CD8-positive, alpha-beta T cell (primary cell): ENCODE measurements at regions of chr3 and their contacts with region 1.

Region 1: GRCh38 chr3:5217824-5218595 is 30.5 kb downstream of the EDEM1 start:
- DNase-seq: no peak
- ATAC-seq: no peak
- H3K4me3 ChIP-seq: no peak overlapping the region
- H3K4me3 Mint-ChIP-seq: no peak overlapping the region
- H3K27ac ChIP-seq: no peak overlapping the region
- H3K27ac Mint-ChIP-seq: peak overlapping the region; percentile 69
- H3K4me1 ChIP-seq: no peaks in the 10 kb centered on the region
- H3K4me1 Mint-ChIP-seq: peaks cover 8% of the 10 kb centered on the region
- H3K27me3 ChIP-seq: no peaks in the 10 kb centered on the region
- H3K27me3 Mint-ChIP-seq: no peaks in the 10 kb centered on the region
- CTCF ChIP-seq: no peak

Region 2: DNA sequence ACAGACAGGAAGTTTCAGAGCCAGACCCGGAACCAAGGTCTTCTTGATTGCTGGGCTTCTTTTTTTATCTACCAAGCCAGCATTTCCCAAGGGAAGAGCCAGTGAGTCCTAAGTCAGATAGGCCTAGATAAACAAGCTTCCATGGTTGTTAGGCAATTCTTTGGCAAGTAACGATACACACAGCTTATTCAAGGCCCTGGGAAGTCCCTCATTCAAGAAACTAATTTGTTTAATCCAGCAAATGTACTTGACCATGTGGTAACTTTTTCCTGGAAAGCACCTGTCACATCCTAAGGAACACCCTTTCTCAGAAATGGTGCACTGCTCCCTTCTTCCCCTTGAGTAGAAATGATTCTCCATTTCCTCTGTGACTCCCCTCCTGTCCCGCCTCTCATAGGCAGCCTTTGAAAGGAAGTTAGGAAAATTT is 514.9 kb before region 1 on chr3:
- CTCF ChIA-PET with region 1: no interaction called
- POLR2A ChIA-PET with region 1: no interaction called
- intact Hi-C with region 1: loop called in 1 of 2 experiments (anchors 10 kb)
- DNase-seq: no peak
- ATAC-seq: no peak
- H3K4me3 ChIP-seq: no peak overlapping the region
- H3K4me3 Mint-ChIP-seq: no peak overlapping the region
- H3K27ac ChIP-seq: no peak overlapping the region
- H3K27ac Mint-ChIP-seq: no peak overlapping the region
- H3K4me1 ChIP-seq: no peaks in the 10 kb centered on the region
- H3K4me1 Mint-ChIP-seq: no peaks in the 10 kb centered on the region
- H3K27me3 ChIP-seq: no peaks in the 10 kb centered on the region
- H3K27me3 Mint-ChIP-seq: no peaks in the 10 kb centered on the region
- CTCF ChIP-seq: no peak

Region 3: DNA sequence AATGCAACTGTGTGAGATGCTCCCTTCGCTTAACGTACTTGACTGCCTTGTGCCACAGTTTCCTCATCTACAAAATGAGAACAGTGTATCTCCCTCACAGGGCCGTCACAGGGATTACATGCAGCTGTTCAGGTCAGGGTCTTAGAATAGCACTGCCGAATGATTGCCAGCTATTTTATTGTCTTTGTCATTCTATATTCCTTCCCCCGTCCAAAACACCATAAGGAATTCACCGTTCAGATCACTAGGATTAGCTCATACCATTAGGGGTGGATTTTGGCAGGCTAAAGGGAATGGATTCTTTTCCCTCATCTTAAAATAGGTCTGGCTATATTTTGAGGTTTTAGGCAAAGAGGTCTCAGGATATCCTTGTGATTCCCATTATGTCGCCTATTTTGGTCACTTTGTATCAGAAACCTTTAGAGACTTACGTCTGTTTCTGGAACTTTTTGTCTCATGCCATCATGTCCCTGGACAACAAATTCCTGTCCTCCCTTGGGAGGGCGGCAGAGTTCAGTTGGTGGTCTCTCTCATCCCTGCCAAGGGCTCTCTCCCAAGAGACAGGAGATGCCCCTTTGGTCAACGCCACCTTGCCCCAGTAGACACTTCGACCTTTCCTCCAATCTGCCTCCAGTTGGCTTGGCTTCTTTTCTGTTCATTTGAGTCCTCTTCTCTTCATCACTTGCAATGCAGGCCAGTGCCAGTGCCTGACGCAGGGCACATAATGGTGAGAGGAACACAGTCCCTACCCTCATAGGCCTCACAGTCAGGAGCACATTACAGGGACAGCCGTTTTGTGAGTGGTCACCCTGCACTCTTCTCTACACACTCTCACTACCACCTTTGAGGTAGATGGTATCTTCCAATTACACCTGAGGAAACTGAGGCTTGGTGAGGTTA is 410.4 kb before region 1 on chr3:
- CTCF ChIA-PET with region 1: no interaction called
- POLR2A ChIA-PET with region 1: no interaction called
- intact Hi-C with region 1: no loop called
- DNase-seq: no peak
- ATAC-seq: no peak
- H3K4me3 ChIP-seq: no peak overlapping the region
- H3K4me3 Mint-ChIP-seq: no peak overlapping the region
- H3K27ac ChIP-seq: no peak overlapping the region
- H3K27ac Mint-ChIP-seq: no peak overlapping the region
- H3K4me1 ChIP-seq: no peaks in the 10 kb centered on the region
- H3K4me1 Mint-ChIP-seq: peaks cover 6% of the 10 kb centered on the region
- H3K27me3 ChIP-seq: no peaks in the 10 kb centered on the region
- H3K27me3 Mint-ChIP-seq: no peaks in the 10 kb centered on the region
- CTCF ChIP-seq: no peak

Region 4: GRCh38 chr3:4898454-4899313 is 319.3 kb before region 1 on chr3:
- CTCF ChIA-PET with region 1: no interaction called
- POLR2A ChIA-PET with region 1: no interaction called
- intact Hi-C with region 1: no loop called
- DNase-seq: peak in 2 of 9 experiments; percentile 14 to 19
- ATAC-seq: no peak
- H3K4me3 ChIP-seq: no peak overlapping the region
- H3K4me3 Mint-ChIP-seq: no peak overlapping the region
- H3K27ac ChIP-seq: no peak overlapping the region
- H3K27ac Mint-ChIP-seq: no peak overlapping the region
- H3K4me1 ChIP-seq: no peaks in the 10 kb centered on the region
- H3K4me1 Mint-ChIP-seq: peaks cover 19% of the 10 kb centered on the region
- H3K27me3 ChIP-seq: no peaks in the 10 kb centered on the region
- H3K27me3 Mint-ChIP-seq: no peaks in the 10 kb centered on the region
- CTCF ChIP-seq: no peak

Region 5: DNA sequence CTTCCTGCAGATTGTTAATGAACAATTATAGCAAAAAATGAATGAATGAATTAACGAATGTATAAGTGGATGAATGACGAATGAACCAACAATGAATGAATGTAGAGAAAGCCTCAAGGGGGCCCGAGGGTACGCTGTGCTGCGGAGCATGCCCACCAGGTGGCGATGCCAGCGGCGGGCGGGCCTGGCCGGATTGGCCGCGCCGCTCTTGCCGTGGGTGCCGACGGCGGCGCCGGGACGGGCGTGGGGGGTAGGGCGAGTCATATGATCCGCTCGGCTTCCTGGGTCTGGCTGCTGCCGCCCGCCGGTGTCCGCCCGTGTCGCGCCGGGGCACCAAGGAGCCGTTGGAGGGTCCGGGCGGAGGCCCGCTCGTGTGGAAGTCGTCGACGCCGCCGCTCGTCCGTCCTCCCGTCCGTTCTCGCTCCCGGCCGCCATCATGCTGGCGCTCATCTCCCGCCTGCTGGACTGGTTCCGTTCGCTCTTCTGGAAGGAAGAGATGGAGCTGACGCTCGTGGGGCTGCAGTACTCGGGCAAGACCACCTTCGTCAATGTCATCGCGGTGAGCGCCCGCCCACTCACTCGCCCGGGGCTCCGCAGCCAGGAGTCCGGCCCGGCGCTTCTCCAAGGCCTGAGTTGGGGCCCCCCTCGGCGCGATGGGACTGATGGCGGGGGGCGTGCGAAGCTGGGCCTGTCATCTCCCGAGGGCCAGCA is 95.8 kb before region 1 on chr3 and contains the start of gene ARL8B:
- CTCF ChIA-PET with region 1: no interaction called
- POLR2A ChIA-PET with region 1: no interaction called
- intact Hi-C with region 1: no loop called
- DNase-seq: peak; percentile 80 to 95 (median 91)
- ATAC-seq: peak; percentile 98
- H3K4me3 ChIP-seq: peak within 1 kb of the TSS; percentile 91 to 98
- H3K4me3 Mint-ChIP-seq: peak within 1 kb of the TSS; percentile 81
- H3K27ac ChIP-seq: peak within 1 kb of the TSS; percentile 87 to 92
- H3K27ac Mint-ChIP-seq: peak within 1 kb of the TSS; percentile 81
- H3K4me1 ChIP-seq: peaks cover 31% of the 10 kb centered on the region
- H3K4me1 Mint-ChIP-seq: peaks cover 38% of the 10 kb centered on the region
- H3K27me3 ChIP-seq: no peaks in the 10 kb centered on the region
- H3K27me3 Mint-ChIP-seq: no peaks in the 10 kb centered on the region
- CTCF ChIP-seq: peak; percentile 92
- total RNA-seq, gene ARL8B: 54.1 to 61.7 TPM